A549 (cell line): ENCODE measurements at regions of chr11 and their contacts with region 1.

Region 1: GRCh38 chr11:84524422-84525051 is 1102.6 kb downstream of the DLG2 start:
- DNase-seq: peak; percentile 17 to 19
- ATAC-seq: peak in 1 of 2 experiments; percentile 52; a peak in 2 of 6 replicates
- H3K4me3 ChIP-seq: no peak overlapping the region
- H3K27ac ChIP-seq: no peak overlapping the region
- H3K4me1 ChIP-seq: no peaks in the 10 kb centered on the region
- CTCF ChIP-seq: peak; percentile 49
- EP300 ChIP-seq: no peak
- POLR2A ChIP-seq: no peak
- RAD21 ChIP-seq: peak; percentile 49 to 53; a peak in 4 of 5 replicates

Region 2: DNA sequence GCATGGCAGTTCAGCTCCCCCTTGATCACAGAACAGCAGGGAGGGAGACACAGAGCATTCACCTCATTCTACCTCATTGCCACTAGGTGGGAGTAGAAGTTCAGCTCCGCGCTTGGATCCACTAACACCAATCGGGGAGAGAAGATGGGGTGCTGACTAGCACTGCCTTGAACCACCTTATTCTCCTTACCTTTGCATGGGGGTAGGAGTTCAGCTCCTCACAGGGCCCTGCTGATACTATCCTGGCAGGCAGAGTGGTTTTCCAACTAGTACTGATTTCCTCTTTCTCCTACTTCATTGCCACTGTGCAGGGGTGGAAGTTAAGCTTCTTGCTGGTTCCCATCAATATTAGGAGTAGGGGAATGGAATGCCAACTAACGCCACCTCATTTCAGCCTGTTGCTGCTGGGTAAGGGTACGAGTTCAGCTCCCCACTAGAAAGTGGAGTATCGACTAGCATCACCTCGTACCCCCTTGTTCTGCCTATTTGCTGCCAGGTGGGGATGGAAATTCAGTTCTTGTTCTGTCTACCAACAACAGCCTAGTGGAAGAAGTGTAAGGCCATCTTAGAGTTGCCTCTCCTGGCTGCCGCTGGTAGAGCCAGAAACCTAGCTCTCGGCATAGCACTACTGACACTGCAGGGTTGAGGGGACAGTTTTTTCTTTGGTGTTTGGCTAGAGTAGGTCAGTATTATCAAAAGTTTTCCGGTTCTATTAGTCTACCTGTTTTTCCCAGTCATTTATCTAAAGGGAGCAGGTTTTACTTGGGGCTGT is 687.5 kb before region 1 on chr11:
- CTCF ChIA-PET with region 1: interaction called, 27 read pairs
- POLR2A ChIA-PET with region 1: no interaction called
- DNase-seq: peak; percentile 52 to 57
- ATAC-seq: peak; percentile 98 to 99
- H3K4me3 ChIP-seq: no peak overlapping the region
- H3K27ac ChIP-seq: no peak overlapping the region
- H3K4me1 ChIP-seq: no peaks in the 10 kb centered on the region
- CTCF ChIP-seq: peak; percentile 66
- EP300 ChIP-seq: no peak
- POLR2A ChIP-seq: no peak
- RAD21 ChIP-seq: peak; percentile 70 to 85

Region 3: DNA sequence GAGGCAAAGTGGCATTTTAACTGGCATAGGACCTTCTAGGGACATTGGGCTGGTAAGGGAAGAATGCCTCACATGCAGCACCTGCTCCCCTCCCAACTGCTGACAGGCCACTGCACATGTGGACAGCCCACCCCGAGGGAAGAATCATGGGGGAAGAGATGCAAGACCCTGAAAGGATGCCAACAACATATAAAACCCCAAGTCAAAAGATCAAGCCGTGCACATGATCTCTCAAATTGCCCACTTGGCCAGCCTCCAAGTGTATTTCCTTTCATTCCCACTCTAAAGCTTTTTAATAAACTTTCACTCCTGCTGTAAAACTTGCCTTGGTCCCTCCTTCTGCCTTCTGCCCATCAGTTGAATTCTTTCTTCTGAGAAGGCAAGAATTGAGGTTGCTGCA is 290.5 kb before region 1 on chr11:
- CTCF ChIA-PET with region 1: no interaction called
- POLR2A ChIA-PET with region 1: no interaction called
- DNase-seq: no peak
- ATAC-seq: no peak
- H3K4me3 ChIP-seq: no peak overlapping the region
- H3K27ac ChIP-seq: no peak overlapping the region
- H3K4me1 ChIP-seq: no peaks in the 10 kb centered on the region
- CTCF ChIP-seq: no peak
- EP300 ChIP-seq: no peak
- POLR2A ChIP-seq: no peak
- RAD21 ChIP-seq: no peak

Region 4: GRCh38 chr11:84333221-84333620 is 191.3 kb before region 1 on chr11:
- CTCF ChIA-PET with region 1: no interaction called
- POLR2A ChIA-PET with region 1: no interaction called
- DNase-seq: no peak
- ATAC-seq: no peak
- H3K4me3 ChIP-seq: no peak overlapping the region
- H3K27ac ChIP-seq: no peak overlapping the region
- H3K4me1 ChIP-seq: no peaks in the 10 kb centered on the region
- CTCF ChIP-seq: no peak
- EP300 ChIP-seq: no peak
- POLR2A ChIP-seq: no peak
- RAD21 ChIP-seq: no peak

Region 5: DNA sequence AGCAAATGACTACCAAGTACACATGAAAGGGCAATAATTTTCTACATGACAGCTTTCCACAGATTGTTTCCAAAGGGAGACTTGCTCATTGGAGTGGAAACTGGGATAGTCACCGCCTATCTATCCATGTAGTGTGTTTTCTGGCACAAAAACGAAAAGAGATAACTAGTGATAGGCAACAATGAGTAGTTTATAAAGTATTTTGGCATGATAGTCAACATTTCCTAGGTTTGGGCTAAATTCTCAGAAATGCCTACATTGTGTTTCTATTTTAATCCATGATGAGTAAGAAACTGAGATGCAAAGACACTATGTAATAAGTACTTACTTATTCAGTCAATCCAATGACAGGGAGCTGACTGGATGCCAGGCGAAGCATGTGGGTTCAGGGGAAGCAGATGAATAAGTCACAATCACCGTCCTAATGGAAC is 26.5 kb before region 1 on chr11:
- CTCF ChIA-PET with region 1: no interaction called
- POLR2A ChIA-PET with region 1: no interaction called
- DNase-seq: no peak
- ATAC-seq: no peak
- H3K4me3 ChIP-seq: no peak overlapping the region
- H3K27ac ChIP-seq: no peak overlapping the region
- H3K4me1 ChIP-seq: no peaks in the 10 kb centered on the region
- CTCF ChIP-seq: no peak
- EP300 ChIP-seq: no peak
- POLR2A ChIP-seq: no peak
- RAD21 ChIP-seq: no peak